ENCODE measurements at regions of chr11 and their contacts with region 1.

Region 1: DNA sequence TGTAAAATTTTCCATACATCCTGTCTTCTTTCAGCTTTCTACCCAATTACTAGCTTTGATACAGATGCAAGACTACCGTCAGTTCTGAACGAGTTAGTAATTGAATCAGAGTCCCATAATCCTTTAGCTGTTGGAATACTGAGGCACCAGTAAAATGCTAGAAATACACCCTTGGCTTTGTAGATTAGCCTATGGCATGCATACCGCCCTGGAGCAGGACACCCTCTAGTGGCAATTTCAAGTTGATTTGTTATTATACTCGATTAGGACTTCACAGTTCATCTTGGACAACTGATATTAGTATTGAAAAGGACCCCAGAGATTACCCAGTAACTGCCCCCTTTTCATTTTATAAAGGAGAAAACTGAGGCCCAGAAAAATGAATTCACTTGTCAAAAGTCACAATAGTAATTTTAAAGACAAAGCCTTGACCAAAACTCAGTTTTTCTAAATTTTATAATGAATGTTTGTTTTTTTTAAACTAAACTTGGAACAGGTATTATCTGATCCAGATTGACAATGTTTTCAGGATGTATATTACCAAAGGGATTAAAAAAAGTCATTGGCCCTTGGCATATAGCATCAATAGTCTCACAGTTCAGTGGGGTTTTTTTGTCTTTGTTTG is 72.6 kb downstream of the HIPK3 start:
- DNase-seq: no peak
- ATAC-seq: peak; percentile 75

Region 2: DNA sequence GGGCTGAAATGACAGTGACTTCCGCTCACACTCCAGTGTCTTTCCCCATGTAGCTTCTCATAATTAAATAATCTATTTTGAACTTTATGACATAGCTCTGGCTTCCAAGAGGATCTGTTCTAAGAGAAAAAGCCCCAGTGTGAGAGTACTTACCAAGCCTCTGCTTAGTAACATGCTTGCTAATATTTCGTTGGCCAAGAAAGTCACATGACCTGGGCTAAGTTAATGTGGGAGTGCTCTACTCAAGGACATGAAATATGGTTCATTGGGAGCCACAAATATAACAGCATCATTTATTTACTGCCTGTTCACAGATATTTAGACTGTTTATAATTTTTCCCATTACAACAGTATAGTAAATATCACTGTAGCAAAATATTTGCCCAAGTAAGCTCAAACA is 577.8 kb before region 1 on chr11:
- intact Hi-C with region 1: no loop called
- DNase-seq: no peak
- ATAC-seq: no peak

Region 3: DNA sequence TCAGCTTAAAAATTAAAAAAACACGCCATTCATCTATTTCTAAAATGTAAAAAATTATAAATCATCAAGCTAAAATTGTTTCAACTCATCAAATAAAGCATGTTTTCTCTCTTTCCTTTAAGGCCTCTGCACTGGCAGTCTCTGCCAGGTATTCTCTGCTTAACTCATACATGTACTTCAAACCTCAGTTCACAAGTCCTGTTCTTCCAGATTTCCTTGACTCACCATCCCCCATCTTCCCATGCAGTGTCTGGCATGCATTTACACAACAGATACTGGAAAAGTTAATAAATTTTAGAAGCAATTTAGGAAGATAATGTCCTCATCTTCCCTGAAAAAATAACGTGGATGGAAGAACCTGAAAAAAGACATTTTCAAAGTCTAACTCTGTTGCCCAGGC is 201.1 kb before region 1 on chr11:
- intact Hi-C with region 1: no loop called
- DNase-seq: no peak
- ATAC-seq: no peak

Region 4: GRCh38 chr11:33168709-33169200 is 161.1 kb before region 1 on chr11:
- intact Hi-C with region 1: loop called (anchors 5 kb)
- DNase-seq: no peak
- ATAC-seq: peak; percentile 51

Region 5: DNA sequence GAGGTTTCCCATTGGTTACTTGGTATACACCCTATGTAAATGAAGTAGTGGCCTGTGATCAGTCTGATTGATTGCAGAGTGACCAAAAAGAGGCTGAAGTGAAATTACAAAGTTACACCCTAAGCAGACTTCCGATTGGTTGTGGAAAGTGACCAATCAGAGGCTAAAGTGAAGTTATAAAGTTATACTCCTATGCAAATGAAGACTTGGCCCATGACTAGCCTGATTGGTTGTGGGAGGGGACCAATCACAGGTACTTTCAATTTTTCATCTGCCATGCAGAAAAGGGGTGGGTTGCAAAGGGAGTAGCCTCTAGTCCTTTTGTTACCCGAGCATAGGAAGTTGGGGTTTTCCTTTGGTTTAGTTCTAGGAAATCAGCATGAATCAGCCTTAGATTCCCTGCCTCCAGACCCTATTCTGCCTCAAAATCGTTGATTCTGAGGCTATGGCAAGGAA is 150.4 kb before region 1 on chr11:
- intact Hi-C with region 1: no loop called
- DNase-seq: no peak
- ATAC-seq: no peak

Region 6: DNA sequence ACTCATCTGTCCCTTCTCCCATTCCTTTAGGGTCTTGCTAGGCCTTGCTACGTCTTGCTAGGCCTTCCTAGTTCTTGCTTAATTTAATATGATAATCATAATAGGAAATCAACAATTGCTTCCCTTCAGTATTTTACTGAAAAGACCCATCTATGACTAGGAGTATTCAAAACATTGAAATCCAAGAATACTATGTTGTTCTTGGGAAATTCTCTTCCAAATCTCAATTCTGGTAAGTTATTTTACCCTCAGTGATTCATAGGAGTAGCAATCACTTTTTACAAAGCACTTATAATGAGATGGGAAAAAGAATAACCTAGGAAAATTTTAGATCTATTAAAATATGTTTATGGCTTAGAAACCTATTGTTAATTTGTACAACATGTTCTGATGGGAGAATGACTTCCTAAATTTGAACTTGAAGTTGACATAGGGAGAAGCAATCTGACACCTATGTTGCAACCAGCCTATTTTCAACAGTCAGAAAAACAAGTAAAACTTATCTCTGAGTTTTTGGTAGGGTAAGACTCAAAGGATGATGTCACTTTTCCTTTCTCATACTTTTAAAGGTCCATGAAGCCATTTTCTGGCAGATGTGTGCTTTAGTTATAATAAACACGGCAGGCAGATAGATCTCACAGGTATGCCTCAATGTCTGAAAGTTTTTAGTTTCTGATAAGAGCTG is 102.1 kb before region 1 on chr11:
- intact Hi-C with region 1: no loop called
- DNase-seq: no peak
- ATAC-seq: peak; percentile 70

Region 7: GRCh38 chr11:33257897-33258630 is 71.8 kb before region 1 on chr11:
- intact Hi-C with region 1: loop called (anchors 5 kb)
- DNase-seq: peak; percentile 94
- ATAC-seq: peak; percentile 91

Measured in Right ventricle myocardium superior (tissue), 1 donor.